Naive thymus-derived CD4-positive, alpha-beta T cell (primary cell): ENCODE measurements at regions of chr6 and their contacts with region 1.

Region 1: GRCh38 chr6:109009236-109009961 is 85.2 kb downstream of the SESN1 start:
- DNase-seq: peak; percentile 85 to 91 (median 90)
- ATAC-seq: peak; percentile 98
- H3K4me3 ChIP-seq: peak overlapping the region; percentile 84
- H3K4me3 Mint-ChIP-seq: peak overlapping the region; percentile 91 to 99 (median 96)
- H3K27ac ChIP-seq: peak overlapping the region; percentile 99
- H3K27ac Mint-ChIP-seq: peak overlapping the region; percentile 94 to 100 (median 98)
- H3K4me1 ChIP-seq: peaks cover 22 to 40% of the 10 kb centered on the region in 2 donors
- H3K4me1 Mint-ChIP-seq: peaks cover 26 to 81% (median 72%) of the 10 kb centered on the region in 7 donors
- H3K27me3 ChIP-seq: no peaks in the 10 kb centered on the region
- H3K27me3 Mint-ChIP-seq: peaks cover 0 to 3% (median 0%) of the 10 kb centered on the region in 5 donors

Region 2: DNA sequence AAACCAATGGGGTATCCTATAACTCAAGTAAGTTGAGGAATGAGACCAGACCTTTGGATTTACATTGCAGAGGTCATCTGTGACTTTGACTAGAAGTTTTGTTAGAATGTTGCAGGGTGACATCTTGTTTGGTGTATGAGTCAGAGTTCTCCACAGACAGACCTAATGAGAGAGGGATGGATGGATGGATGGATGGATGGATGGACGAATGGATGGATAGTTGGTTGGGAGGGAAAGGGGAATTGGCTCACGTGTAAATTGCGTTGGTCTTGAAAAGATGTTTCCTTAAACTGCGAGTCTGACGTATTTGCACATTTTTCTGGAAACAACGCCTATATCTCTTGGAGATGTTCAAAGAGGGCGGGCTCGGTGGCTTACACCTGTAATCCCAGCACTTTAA is 1982.4 kb before region 1 on chr6:
- CTCF ChIA-PET with region 1: no interaction called
- POLR2A ChIA-PET with region 1: no interaction called
- intact Hi-C with region 1: loop called in 1 of 2 experiments (anchors 5 kb)
- DNase-seq: no peak
- ATAC-seq: no peak
- H3K4me3 ChIP-seq: no peak overlapping the region
- H3K4me3 Mint-ChIP-seq: peak overlapping the region; percentile 4 to 99 (median 94)
- H3K27ac ChIP-seq: no peak overlapping the region
- H3K27ac Mint-ChIP-seq: peak overlapping the region in 5 of 9 donors; percentile 32 to 92 (median 63)
- H3K4me1 ChIP-seq: peaks cover 3 to 14% of the 10 kb centered on the region in 2 donors
- H3K4me1 Mint-ChIP-seq: peaks cover 20 to 35% (median 29%) of the 10 kb centered on the region in 7 donors
- H3K27me3 ChIP-seq: no peaks in the 10 kb centered on the region
- H3K27me3 Mint-ChIP-seq: no peaks in the 10 kb centered on the region

Region 3: GRCh38 chr6:108294727-108295625 is 714.4 kb before region 1 on chr6 and contains the start of gene AFG1L:
- CTCF ChIA-PET with region 1: no interaction called
- POLR2A ChIA-PET with region 1: no interaction called
- intact Hi-C with region 1: loop called in 1 of 2 experiments (anchors 10 kb)
- DNase-seq: peak; percentile 81 to 90 (median 88)
- ATAC-seq: peak; percentile 96
- H3K4me3 ChIP-seq: peak within 1 kb of the TSS; percentile 99
- H3K4me3 Mint-ChIP-seq: peak within 1 kb of the TSS; percentile 93 to 99 (median 98)
- H3K27ac ChIP-seq: peak within 1 kb of the TSS; percentile 88
- H3K27ac Mint-ChIP-seq: peak within 1 kb of the TSS; percentile 95 to 100 (median 99)
- H3K4me1 ChIP-seq: peaks cover 10 to 13% of the 10 kb centered on the region in 2 donors
- H3K4me1 Mint-ChIP-seq: peaks cover 11 to 37% (median 26%) of the 10 kb centered on the region in 7 donors
- H3K27me3 ChIP-seq: no peaks in the 10 kb centered on the region
- H3K27me3 Mint-ChIP-seq: peaks cover 0 to 3% (median 0%) of the 10 kb centered on the region in 5 donors
- total RNA-seq, gene AFG1L: 4.1 to 9.2 (median 7.2) TPM

Region 4: GRCh38 chr6:108689247-108690161 is 319.9 kb before region 1 on chr6:
- CTCF ChIA-PET with region 1: no interaction called
- POLR2A ChIA-PET with region 1: no interaction called
- intact Hi-C with region 1: no loop called
- DNase-seq: no peak
- ATAC-seq: peak; percentile 56
- H3K4me3 ChIP-seq: no peak overlapping the region
- H3K4me3 Mint-ChIP-seq: no peak overlapping the region
- H3K27ac ChIP-seq: no peak overlapping the region
- H3K27ac Mint-ChIP-seq: no peak overlapping the region
- H3K4me1 ChIP-seq: no peaks in the 10 kb centered on the region
- H3K4me1 Mint-ChIP-seq: peaks cover 0 to 14% (median 10%) of the 10 kb centered on the region in 7 donors
- H3K27me3 ChIP-seq: no peaks in the 10 kb centered on the region
- H3K27me3 Mint-ChIP-seq: no peaks in the 10 kb centered on the region

Region 5: DNA sequence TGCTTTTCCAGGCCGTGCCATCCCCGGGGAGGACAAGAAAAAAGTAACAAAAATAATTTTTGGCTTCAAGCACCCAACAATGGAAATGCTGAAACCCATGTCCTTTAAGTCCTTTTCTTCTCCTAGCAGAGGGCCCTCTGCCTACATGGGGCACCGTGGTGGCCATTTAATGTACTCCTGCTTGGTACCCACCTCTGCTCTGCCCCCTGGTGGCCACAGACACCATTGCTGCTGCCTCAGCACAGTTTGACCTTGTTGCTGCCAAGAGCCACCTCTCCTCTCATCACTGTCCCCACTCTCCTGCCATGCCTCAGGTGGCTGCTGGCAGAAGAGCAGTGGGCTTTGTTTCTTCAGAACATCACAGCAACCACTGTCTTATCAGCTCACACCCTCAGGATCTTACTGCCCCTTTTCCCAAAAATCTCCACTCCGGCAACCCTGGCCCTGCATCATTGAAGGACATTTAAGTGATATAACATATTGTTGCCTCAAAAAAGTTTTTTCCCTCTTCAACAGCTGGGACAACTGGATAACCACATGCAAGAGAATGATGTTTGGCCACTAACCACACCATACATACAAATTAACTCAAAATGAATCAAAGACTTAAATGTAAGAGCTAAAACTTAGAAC is 174.1 kb before region 1 on chr6:
- CTCF ChIA-PET with region 1: no interaction called
- POLR2A ChIA-PET with region 1: no interaction called
- intact Hi-C with region 1: loop called in 1 of 2 experiments (anchors 5 kb)
- DNase-seq: peak; percentile 65 to 82 (median 76)
- ATAC-seq: peak; percentile 98
- H3K4me3 ChIP-seq: no peak overlapping the region
- H3K4me3 Mint-ChIP-seq: no peak overlapping the region
- H3K27ac ChIP-seq: no peak overlapping the region
- H3K27ac Mint-ChIP-seq: peak overlapping the region in 6 of 9 donors; percentile 27 to 52 (median 48)
- H3K4me1 ChIP-seq: peaks cover 9 to 18% of the 10 kb centered on the region in 2 donors
- H3K4me1 Mint-ChIP-seq: peaks cover 14 to 30% (median 22%) of the 10 kb centered on the region in 7 donors
- H3K27me3 ChIP-seq: no peaks in the 10 kb centered on the region
- H3K27me3 Mint-ChIP-seq: peaks cover 0 to 44% (median 0%) of the 10 kb centered on the region in 5 donors

Region 6: DNA sequence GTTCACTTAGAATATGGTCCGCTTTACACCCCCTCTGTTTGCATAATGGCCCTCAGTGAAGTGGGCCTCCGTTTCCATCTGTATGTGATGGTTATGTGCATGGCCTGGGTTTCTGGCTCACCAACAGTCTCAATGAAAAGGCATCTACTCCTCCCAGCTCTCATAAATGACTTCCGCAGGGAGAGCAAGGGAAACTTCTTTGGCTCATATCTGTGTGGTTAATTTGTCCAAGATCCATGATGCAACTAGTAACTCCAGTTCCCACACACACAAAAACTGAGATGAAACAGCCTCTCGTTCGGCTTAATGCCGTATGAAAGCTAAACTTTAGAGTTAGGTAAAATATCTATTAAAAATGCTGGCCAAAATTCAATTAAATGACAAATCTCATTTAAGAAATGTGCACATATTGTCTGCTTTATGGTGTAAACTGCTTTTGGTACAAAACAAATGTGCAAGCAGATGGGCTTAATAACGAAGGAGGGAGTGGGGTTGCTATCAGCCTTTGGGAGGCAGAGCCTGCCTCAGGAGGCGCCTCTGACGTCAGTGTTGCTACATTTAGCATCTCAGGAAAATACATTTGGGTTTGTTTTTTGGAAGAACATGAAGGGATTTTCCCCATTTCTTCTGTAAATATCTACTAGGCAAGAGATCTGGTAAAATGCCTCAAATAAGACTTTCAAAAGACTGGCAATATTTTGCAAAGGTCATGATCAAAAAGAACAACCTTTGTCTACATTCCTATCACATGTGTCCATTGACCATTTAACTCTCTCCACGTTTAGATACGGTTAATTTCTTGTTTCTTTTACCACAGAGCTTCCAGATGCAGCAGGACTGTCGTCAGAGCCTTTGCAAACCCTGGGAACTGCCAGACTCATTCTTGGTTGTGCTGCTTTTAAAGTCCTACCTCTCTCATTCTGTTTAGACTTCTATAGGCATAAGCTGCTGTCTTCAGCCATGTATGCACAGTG is 64.4 kb before region 1 on chr6:
- CTCF ChIA-PET with region 1: no interaction called
- POLR2A ChIA-PET with region 1: interaction called, 4 read pairs
- intact Hi-C with region 1: loop called (anchors 1 to 2 kb)
- DNase-seq: no peak
- ATAC-seq: no peak
- H3K4me3 ChIP-seq: no peak overlapping the region
- H3K4me3 Mint-ChIP-seq: peak overlapping the region in 1 of 10 donors; percentile 17
- H3K27ac ChIP-seq: no peak overlapping the region
- H3K27ac Mint-ChIP-seq: peak overlapping the region in 6 of 9 donors; percentile 5 to 75 (median 66)
- H3K4me1 ChIP-seq: peaks cover 28 to 38% of the 10 kb centered on the region in 2 donors
- H3K4me1 Mint-ChIP-seq: peaks cover 22 to 82% (median 73%) of the 10 kb centered on the region in 7 donors
- H3K27me3 ChIP-seq: no peaks in the 10 kb centered on the region
- H3K27me3 Mint-ChIP-seq: peaks cover 0 to 5% (median 0%) of the 10 kb centered on the region in 5 donors

Region 7: DNA sequence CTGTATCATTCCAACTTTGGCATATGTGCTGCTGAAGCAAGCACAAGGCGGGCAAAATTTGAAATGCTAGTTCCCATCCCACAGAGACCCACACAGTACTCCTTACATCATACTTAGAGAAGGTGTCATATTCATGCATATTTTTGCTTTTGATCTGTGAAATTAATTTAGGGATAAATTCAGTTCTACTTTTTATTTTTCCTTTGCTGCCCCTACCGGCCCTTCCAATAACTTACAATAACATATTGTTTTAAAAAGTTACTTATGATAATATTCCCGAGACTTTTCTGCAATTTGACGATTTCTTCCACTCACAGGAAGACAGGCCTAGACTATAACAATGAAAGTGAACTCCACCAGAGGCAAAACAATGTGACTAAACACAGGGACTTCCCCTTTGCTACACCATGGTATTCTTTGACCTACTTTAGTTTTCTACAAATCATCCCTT is 50.2 kb after region 1 on chr6:
- CTCF ChIA-PET with region 1: interaction called, 3 read pairs
- POLR2A ChIA-PET with region 1: interaction called, 14 read pairs
- intact Hi-C with region 1: loop called (anchors 1 to 5 kb)
- DNase-seq: peak in 7 of 9 donors; percentile 24 to 61 (median 40)
- ATAC-seq: peak; percentile 98
- H3K4me3 ChIP-seq: no peak overlapping the region
- H3K4me3 Mint-ChIP-seq: peak overlapping the region; percentile 4 to 68 (median 51)
- H3K27ac ChIP-seq: peak overlapping the region; percentile 33
- H3K27ac Mint-ChIP-seq: peak overlapping the region; percentile 40 to 92 (median 80)
- H3K4me1 ChIP-seq: peaks cover 13 to 19% of the 10 kb centered on the region in 2 donors
- H3K4me1 Mint-ChIP-seq: peaks cover 18 to 75% (median 59%) of the 10 kb centered on the region in 7 donors
- H3K27me3 ChIP-seq: no peaks in the 10 kb centered on the region
- H3K27me3 Mint-ChIP-seq: peaks cover 0 to 8% (median 0%) of the 10 kb centered on the region in 5 donors